GM10248 (cell line): ENCODE measurements at regions of chr10 and their contacts with region 1.

Region 1: GRCh38 chr10:62779487-62780248 is 24.9 kb upstream of the ADO start:
- DNase-seq: peak; percentile 67
- CTCF ChIP-seq: no peak

Region 2: GRCh38 chr10:62760401-62760800 is 19.3 kb before region 1 on chr10:
- CTCF ChIA-PET with region 1: interaction called, 81 read pairs
- POLR2A ChIA-PET with region 1: no interaction called
- DNase-seq: no peak
- CTCF ChIP-seq: no peak

Region 3: DNA sequence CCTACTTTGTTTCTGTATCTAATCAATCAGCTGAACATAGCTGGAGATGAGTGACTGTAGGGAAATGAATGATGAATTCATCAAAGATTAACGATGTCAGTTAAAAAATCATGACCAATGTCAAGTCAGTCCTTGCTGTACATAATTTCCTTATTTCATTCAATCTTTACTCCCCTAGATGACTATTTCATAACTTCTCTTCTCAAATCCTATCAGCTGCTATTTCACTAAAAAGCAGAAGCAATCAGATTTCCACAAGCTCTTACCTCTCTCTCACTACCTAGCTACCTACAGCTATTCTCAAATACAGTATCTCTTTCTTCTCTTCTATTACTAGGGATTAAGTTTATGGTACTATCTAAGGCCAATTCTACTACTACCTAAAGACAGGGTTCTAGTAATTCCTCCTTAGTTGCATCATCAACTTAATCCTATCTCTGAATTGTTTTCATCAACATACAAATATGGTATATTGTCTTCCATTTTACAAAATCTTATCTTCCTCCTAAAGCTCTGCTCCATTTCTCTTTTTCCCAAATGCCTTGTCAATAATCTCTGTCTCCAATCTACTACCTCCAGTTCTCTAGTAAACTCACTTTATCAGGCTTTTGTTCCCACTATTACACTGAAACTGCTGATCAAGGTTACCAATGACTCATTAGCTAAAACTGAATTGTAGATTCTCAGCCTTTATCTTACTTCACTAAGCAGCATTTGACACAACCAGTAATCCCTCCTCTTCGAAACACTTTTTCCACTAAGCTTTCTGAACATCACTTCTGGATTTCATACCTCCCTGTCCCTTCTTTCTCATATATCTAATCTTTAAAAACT is 657.7 kb after region 1 on chr10:
- CTCF ChIA-PET with region 1: no interaction called
- POLR2A ChIA-PET with region 1: no interaction called
- DNase-seq: no peak
- CTCF ChIP-seq: no peak